GM10248 (cell line): ENCODE measurements at regions of chr6 and their contacts with region 1.

Region 1: GRCh38 chr6:168865-169455 is 123.3 kb upstream of the DUSP22 start:
- DNase-seq: no peak
- CTCF ChIP-seq: peak; percentile 49

Region 2: DNA sequence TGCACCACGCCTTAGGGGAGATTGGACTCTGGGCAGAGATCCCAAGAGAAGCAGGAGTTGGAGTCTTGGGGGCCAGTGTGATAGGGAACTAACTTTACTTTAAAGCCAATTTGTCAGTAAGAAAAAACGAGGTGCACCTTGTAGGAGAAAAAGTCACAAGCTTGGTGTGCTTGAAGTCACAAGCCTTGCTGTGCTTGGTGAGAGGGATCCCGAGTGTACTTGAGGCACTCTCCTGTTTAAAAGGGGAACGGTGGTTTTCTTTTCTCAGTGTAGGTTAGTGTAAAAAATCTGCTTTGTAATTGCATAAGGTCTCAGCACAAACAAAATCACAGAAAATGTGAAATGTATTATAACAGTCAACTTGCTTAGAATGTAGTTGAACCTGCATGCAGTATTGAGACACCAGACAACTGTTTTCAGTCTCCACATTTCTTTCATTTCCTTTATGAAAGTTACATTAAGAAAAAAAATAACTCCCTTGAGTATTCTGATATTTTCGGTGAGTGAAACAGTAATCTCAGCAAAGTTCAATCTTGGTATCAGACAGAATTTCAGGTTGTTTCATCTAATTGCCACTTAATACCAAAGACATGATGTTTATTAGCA is 12.2 kb after region 1 on chr6:
- CTCF ChIA-PET with region 1: interaction called, 19 read pairs
- POLR2A ChIA-PET with region 1: no interaction called
- DNase-seq: peak; percentile 65
- CTCF ChIP-seq: no peak